CD4-positive, alpha-beta T cell (primary cell): ENCODE measurements at regions of chr11 and their contacts with region 1.

Region 1: DNA sequence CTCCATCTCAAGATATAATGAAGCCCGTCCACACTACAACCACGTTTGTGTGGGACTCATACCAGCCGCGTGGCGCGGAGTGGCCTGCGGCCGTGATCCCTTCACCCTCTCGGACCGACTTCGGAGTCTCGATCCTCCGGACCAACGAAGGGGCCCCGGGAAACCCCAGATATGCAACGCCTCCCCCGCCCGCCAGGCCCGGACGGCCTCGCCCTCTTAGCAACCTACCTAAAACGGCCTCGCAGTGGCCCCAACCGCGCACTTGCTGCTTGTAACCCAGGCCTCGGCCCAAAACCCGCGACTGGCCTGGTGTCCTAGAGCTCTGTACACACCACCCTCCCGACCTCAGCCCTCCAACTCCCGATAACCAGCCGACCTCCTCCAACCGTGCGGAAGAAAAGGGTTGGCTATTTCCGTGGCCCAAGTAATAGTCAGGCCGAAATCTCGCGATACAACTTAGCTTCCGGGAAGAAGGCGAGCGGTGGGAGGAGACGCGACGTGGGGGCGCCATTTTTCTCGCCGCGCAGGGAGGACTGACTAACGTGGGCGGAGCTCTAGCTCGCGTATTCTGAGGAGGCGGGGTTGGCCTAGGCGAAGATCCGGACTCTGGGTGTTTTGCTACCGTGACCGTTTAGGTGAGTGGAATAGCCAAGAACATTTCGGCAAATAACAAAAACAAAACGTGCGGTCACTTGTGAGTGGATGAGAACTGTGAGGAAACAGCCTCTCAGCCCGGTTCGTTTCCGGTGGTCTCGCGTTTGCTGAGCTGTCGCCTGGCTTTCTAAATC is at the starts of genes C11orf54 and TAF1D:
- DNase-seq: peak; percentile 92 to 99 (median 96)
- ATAC-seq: peak; percentile 90
- H3K4me3 ChIP-seq: peak within 1 kb of the TSS; percentile 88
- H3K4me3 Mint-ChIP-seq: peak within 1 kb of the TSS; percentile 98
- H3K27ac ChIP-seq: peak within 1 kb of the TSS; percentile 95 to 97
- H3K27ac Mint-ChIP-seq: peak within 1 kb of the TSS; percentile 98
- H3K4me1 ChIP-seq: peaks cover 22% of the 10 kb centered on the region
- H3K4me1 Mint-ChIP-seq: peaks cover 76% of the 10 kb centered on the region
- H3K27me3 ChIP-seq: no peaks in the 10 kb centered on the region
- H3K27me3 Mint-ChIP-seq: no peaks in the 10 kb centered on the region
- CTCF ChIP-seq: no peak
- total RNA-seq, gene C11orf54: 6.8 to 8.0 TPM
- total RNA-seq, gene TAF1D: 161 to 173 TPM

Region 2: GRCh38 chr11:93143800-93144199 is 597.5 kb before region 1 on chr11:
- CTCF ChIA-PET with region 1: no interaction called
- POLR2A ChIA-PET with region 1: no interaction called
- intact Hi-C with region 1: no loop called
- DNase-seq: no peak
- ATAC-seq: no peak
- H3K4me3 ChIP-seq: no peak overlapping the region
- H3K4me3 Mint-ChIP-seq: no peak overlapping the region
- H3K27ac ChIP-seq: no peak overlapping the region
- H3K27ac Mint-ChIP-seq: no peak overlapping the region
- H3K4me1 ChIP-seq: no peaks in the 10 kb centered on the region
- H3K4me1 Mint-ChIP-seq: no peaks in the 10 kb centered on the region
- H3K27me3 ChIP-seq: no peaks in the 10 kb centered on the region
- H3K27me3 Mint-ChIP-seq: no peaks in the 10 kb centered on the region
- CTCF ChIP-seq: no peak

Region 3: DNA sequence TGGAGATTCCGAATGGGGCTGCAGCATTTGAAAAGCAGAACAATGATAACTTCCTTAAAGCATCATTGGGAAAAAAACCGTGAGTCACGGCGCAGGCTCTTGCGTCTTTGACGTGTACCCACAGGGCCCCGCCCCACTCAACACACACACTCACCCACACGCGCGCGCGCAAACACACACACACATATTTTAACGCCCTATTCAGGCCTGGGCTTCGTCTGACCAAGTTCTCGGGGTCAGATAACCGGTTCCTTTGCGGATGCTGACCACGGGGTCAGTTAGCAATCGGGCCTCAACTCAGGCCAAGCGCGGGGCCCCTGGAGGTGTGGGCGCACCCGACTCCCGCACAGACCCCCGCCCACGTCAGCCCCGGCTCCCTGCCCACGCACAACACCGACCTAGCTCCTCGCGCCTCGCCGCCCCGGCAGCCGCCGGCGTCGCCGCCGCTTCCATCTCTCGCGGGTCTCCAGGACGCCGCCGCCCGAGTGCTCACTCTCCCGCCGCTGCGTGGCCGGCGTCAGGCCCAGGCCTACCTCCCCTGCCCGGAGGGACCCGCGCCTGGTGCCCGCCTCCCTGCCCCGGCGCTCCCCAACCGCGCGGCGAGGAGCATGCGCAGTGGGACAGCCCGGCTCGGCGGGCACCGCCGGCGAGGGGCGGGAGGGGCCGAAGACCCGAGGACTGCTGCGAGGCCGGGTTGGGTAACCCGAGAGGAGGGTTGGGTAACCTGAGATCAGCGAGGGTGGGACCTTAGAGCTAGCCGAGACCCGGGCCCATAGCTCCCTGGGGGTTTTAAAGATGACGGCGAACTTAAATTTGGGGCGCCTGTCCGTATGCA is 543.7 kb before region 1 on chr11 and contains the start of gene SLC36A4:
- CTCF ChIA-PET with region 1: no interaction called
- POLR2A ChIA-PET with region 1: interaction called, 11 read pairs
- intact Hi-C with region 1: loop called in 1 of 2 experiments (anchors 2 kb)
- DNase-seq: peak; percentile 76 to 95 (median 80)
- ATAC-seq: peak; percentile 88
- H3K4me3 ChIP-seq: peak within 1 kb of the TSS; percentile 78
- H3K4me3 Mint-ChIP-seq: peak within 1 kb of the TSS; percentile 94
- H3K27ac ChIP-seq: peak within 1 kb of the TSS; percentile 85 to 90
- H3K27ac Mint-ChIP-seq: peak within 1 kb of the TSS; percentile 97
- H3K4me1 ChIP-seq: peaks cover 6% of the 10 kb centered on the region
- H3K4me1 Mint-ChIP-seq: peaks cover 26% of the 10 kb centered on the region
- H3K27me3 ChIP-seq: no peaks in the 10 kb centered on the region
- H3K27me3 Mint-ChIP-seq: no peaks in the 10 kb centered on the region
- CTCF ChIP-seq: no peak
- total RNA-seq, gene SLC36A4: 15.9 to 16.4 TPM

Region 4: GRCh38 chr11:93718057-93718563 is 23.2 kb before region 1 on chr11:
- CTCF ChIA-PET with region 1: no interaction called
- POLR2A ChIA-PET with region 1: interaction called, 34 read pairs
- intact Hi-C with region 1: no loop called
- DNase-seq: peak in 3 of 14 experiments; percentile 40 to 73 (median 45)
- ATAC-seq: peak; percentile 39
- H3K4me3 ChIP-seq: no peak overlapping the region
- H3K4me3 Mint-ChIP-seq: peak overlapping the region; percentile 55
- H3K27ac ChIP-seq: peak overlapping the region in 1 of 2 donors; percentile 11
- H3K27ac Mint-ChIP-seq: peak overlapping the region; percentile 64
- H3K4me1 ChIP-seq: peaks cover 13% of the 10 kb centered on the region
- H3K4me1 Mint-ChIP-seq: peaks cover 26% of the 10 kb centered on the region
- H3K27me3 ChIP-seq: no peaks in the 10 kb centered on the region
- H3K27me3 Mint-ChIP-seq: no peaks in the 10 kb centered on the region
- CTCF ChIP-seq: no peak

Region 5: DNA sequence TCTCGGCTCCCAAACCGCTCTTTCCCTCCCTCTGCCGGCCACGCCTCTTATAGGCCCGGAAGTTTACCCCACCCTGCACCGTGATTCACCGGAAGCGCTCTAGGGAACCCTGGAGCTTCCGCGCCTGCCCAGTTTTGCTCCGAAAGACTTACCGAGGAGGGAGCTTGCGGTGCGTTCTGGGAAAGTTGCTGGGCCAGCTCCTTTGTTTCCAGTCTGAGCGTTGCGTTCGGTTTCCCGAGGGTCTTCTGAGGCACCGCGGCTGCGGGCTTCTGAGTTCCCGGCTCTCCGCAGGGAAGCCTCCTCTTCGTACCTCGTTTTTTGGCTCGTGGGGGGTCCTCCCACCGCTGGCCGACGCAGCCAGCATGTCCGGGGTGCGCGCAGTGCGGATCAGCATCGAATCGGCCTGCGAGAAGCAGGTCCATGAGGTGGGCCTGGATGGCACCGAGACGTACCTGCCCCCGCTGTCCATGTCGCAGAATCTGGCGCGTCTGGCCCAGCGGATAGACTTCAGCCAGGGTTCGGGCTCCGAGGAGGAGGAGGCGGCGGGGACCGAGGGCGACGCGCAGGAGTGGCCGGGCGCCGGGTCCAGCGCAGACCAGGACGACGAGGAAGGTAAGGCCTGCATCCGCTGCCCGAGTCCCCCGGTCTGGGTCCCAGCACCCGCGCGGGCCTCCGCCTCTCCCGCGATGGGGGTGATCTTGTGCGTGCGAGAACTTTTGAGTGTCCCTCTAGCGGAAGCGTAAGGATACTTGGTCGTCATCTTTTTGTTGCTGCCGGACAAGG is 43.1 kb after region 1 on chr11 and contains the start of gene MED17:
- CTCF ChIA-PET with region 1: interaction called, 18 read pairs
- POLR2A ChIA-PET with region 1: interaction called, 149 read pairs
- intact Hi-C with region 1: loop called (anchors 1 kb)
- DNase-seq: peak; percentile 79 to 95 (median 86)
- ATAC-seq: peak; percentile 96
- H3K4me3 ChIP-seq: peak within 1 kb of the TSS; percentile 97
- H3K4me3 Mint-ChIP-seq: peak within 1 kb of the TSS; percentile 89
- H3K27ac ChIP-seq: peak within 1 kb of the TSS; percentile 86 to 90
- H3K27ac Mint-ChIP-seq: peak within 1 kb of the TSS; percentile 81
- H3K4me1 ChIP-seq: peaks cover 32% of the 10 kb centered on the region
- H3K4me1 Mint-ChIP-seq: peaks cover 53% of the 10 kb centered on the region
- H3K27me3 ChIP-seq: no peaks in the 10 kb centered on the region
- H3K27me3 Mint-ChIP-seq: no peaks in the 10 kb centered on the region
- CTCF ChIP-seq: no peak
- total RNA-seq, gene MED17: 63.1 to 63.6 TPM

Region 6: GRCh38 chr11:94493281-94494125 is 752.2 kb after region 1 on chr11 and contains the starts of genes ANKRD49 and MRE11:
- CTCF ChIA-PET with region 1: no interaction called
- POLR2A ChIA-PET with region 1: interaction called, 12 read pairs
- intact Hi-C with region 1: loop called in 1 of 2 experiments (anchors 5 kb)
- DNase-seq: peak; percentile 91 to 99 (median 95)
- ATAC-seq: peak; percentile 98
- H3K4me3 ChIP-seq: peak within 1 kb of the TSS; percentile 83
- H3K4me3 Mint-ChIP-seq: peak within 1 kb of the TSS; percentile 97
- H3K27ac ChIP-seq: peak within 1 kb of the TSS; percentile 65 to 86
- H3K27ac Mint-ChIP-seq: peak within 1 kb of the TSS; percentile 92
- H3K4me1 ChIP-seq: peaks cover 8% of the 10 kb centered on the region
- H3K4me1 Mint-ChIP-seq: peaks cover 54% of the 10 kb centered on the region
- H3K27me3 ChIP-seq: no peaks in the 10 kb centered on the region
- H3K27me3 Mint-ChIP-seq: no peaks in the 10 kb centered on the region
- CTCF ChIP-seq: no peak
- total RNA-seq, gene ANKRD49: 54.4 to 56.4 TPM
- total RNA-seq, gene MRE11: 17.0 to 18.6 TPM